Breast epithelium (tissue), 4 donors: ENCODE measurements at regions of chr11 and their contacts with region 1.

Region 1: DNA sequence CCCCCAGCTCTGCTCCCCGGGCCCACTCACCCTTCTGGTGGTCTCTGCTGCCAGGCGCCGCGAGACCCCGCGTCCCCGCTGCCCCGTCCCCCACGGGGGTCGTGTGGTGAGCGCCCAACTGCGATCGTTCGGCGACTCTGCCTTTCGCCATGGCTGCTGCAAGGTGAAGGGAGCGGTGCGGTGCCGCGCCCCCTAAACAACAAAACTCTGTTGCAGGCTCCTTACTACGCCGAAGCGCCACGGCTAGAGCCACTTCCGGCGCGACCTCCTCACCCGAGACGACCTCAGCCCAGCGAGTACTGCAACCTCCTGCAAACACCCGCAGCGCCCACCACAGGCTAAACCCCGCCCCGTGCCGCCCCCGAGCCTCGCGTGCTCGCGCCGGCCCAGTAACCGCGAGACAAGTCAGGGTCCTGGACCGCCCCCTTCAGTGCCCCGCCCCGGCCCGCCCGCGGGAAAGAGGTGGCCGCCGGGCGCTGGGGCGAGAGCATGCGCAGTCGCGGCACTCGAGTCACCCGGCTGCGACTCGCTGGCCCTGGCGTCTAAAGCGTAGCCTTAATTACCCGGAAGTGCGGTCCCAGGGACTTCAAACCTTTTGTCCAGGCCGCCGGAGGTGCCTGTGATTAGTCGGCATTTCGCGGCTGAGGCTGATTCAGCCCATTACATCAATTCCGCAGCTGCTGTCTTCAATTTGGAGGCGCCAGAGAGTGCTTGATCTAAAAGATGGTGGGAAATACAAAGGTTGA is at the start of gene TMEM41B:
- DNase-seq: peak; percentile 96 to 97
- H3K4me3 ChIP-seq: peak within 1 kb of the TSS; percentile 82 to 99 (median 89)
- H3K27ac ChIP-seq: peak within 1 kb of the TSS; percentile 91 to 92
- H3K4me1 ChIP-seq: peaks cover 0 to 5% of the 10 kb centered on the region in 2 donors
- H3K27me3 ChIP-seq: no peaks in the 10 kb centered on the region
- CTCF ChIP-seq: no peak
- POLR2A ChIP-seq: peak; percentile 46
- total RNA-seq, gene TMEM41B: 19.2 to 42.3 (median 38.0) TPM

Region 2: DNA sequence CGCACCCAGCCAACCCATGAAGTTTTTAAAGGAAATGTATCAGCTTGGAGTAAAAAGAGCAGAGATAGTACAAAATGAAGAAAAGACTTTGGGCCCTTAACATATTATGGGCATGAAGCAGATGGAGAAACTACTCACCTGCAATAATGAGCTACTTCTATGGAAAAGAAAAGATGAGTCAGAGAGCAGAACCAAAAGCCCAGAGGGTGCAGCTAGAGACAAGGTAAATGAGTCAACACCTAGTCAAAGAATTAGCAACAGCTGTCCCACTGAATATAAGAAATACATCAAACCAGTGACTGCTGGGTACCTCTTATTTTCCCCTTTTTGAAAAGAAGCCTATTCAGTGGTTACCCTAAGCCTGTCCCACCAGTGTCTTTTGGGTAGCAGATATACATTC is 570.0 kb before region 1 on chr11:
- intact Hi-C with region 1: no loop called
- DNase-seq: no peak
- H3K4me3 ChIP-seq: no peak overlapping the region
- H3K27ac ChIP-seq: no peak overlapping the region
- H3K4me1 ChIP-seq: no peaks in the 10 kb centered on the region
- H3K27me3 ChIP-seq: no peaks in the 10 kb centered on the region
- CTCF ChIP-seq: no peak
- POLR2A ChIP-seq: no peak

Region 3: GRCh38 chr11:9363954-9364912 is 49.8 kb after region 1 on chr11:
- intact Hi-C with region 1: loop called (anchors 10 kb)
- DNase-seq: peak; percentile 94
- H3K4me3 ChIP-seq: peak overlapping the region; percentile 40 to 63 (median 53)
- H3K27ac ChIP-seq: peak overlapping the region; percentile 97 to 98
- H3K4me1 ChIP-seq: peaks cover 0 to 7% of the 10 kb centered on the region in 2 donors
- H3K27me3 ChIP-seq: no peaks in the 10 kb centered on the region
- CTCF ChIP-seq: no peak
- POLR2A ChIP-seq: no peak

Region 4: DNA sequence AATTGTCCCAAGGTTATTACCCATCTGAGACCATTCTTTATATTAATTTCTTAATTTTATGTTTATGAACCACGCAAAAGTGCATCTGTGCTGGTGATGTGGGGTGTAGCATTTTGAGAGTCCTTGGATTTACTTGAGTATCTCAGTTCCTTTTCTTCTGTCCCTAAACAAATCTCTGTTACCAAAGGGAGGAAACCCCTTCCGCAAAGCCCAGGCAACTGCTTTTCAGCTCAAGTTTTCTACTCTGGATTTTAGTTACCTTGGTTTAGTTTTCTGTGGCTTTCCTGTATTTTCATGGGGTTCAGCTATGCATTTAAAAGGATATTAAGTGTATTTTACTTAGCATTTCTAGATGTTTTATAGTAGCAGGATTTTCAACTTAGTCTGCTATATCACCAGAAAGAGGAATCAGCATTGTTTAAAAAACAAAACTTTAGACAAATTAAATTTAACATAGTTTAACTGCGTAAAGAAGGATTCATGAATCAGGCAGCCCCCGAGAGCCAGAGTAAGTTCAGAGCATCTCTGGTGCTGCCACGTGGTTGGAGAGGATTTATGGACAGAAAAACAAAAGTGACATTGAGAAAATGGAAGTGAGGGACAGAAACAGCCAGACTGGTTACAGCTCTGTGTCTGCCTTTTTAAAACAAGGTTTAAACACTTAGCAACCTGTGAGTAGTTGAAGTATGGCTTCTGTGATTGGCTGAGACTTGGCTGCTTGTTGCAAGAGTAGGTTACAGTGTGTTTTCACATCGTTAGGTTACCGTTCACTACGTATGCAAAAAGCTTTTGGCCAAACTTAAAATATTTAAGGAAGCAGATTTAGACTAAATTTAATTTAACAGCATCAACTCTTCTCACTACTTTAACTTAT is 1000.0 kb after region 1 on chr11:
- intact Hi-C with region 1: no loop called
- DNase-seq: no peak
- H3K4me3 ChIP-seq: no peak overlapping the region
- H3K27ac ChIP-seq: no peak overlapping the region
- H3K4me1 ChIP-seq: no peaks in the 10 kb centered on the region
- H3K27me3 ChIP-seq: no peaks in the 10 kb centered on the region
- CTCF ChIP-seq: no peak
- POLR2A ChIP-seq: no peak